ENCODE measurements at regions of chr1 and their contacts with region 1.

Region 1: GRCh38 chr1:64891448-64891825 is 74.9 kb downstream of the JAK1 start:
- DNase-seq: no peak
- ATAC-seq: peak in 7 of 8 donors; percentile 34 to 76 (median 61)
- H3K4me3 ChIP-seq: peak overlapping the region in 6 of 10 donors; percentile 1 to 35 (median 20)
- H3K27ac ChIP-seq: peak overlapping the region in 9 of 10 donors; percentile 15 to 69 (median 48)
- H3K4me1 ChIP-seq: peaks cover 18 to 97% (median 85%) of the 10 kb centered on the region in 9 donors
- H3K27me3 ChIP-seq: no peaks in the 10 kb centered on the region
- CTCF ChIP-seq: no peak

Region 2: GRCh38 chr1:64933296-64934070 is 42.0 kb after region 1 on chr1:
- intact Hi-C with region 1: loop called in 1 of 10 experiments (anchors 5 kb)
- DNase-seq: peak in 1 of 2 donors; percentile 58
- ATAC-seq: peak; percentile 70 to 91 (median 83)
- H3K4me3 ChIP-seq: peak overlapping the region in 2 of 10 donors; percentile 1 to 8
- H3K27ac ChIP-seq: peak overlapping the region; percentile 53 to 85 (median 73)
- H3K4me1 ChIP-seq: peaks cover 9 to 65% (median 56%) of the 10 kb centered on the region in 9 donors
- H3K27me3 ChIP-seq: no peaks in the 10 kb centered on the region
- CTCF ChIP-seq: no peak

Region 3: GRCh38 chr1:65174585-65174984 is 283.1 kb after region 1 on chr1:
- intact Hi-C with region 1: loop called in 1 of 10 experiments (anchors 5 kb)
- DNase-seq: peak in 1 of 2 donors; percentile 71
- ATAC-seq: peak; percentile 31 to 62 (median 54)
- H3K4me3 ChIP-seq: no peak overlapping the region
- H3K27ac ChIP-seq: peak overlapping the region; percentile 55 to 88 (median 85)
- H3K4me1 ChIP-seq: peaks cover 6 to 84% (median 67%) of the 10 kb centered on the region in 9 donors
- H3K27me3 ChIP-seq: no peaks in the 10 kb centered on the region
- CTCF ChIP-seq: no peak

Region 4: GRCh38 chr1:65213271-65214023 is 322.0 kb after region 1 on chr1:
- intact Hi-C with region 1: no loop called
- DNase-seq: no peak
- ATAC-seq: peak in 3 of 8 donors; percentile 7 to 43 (median 15)
- H3K4me3 ChIP-seq: no peak overlapping the region
- H3K27ac ChIP-seq: no peak overlapping the region
- H3K4me1 ChIP-seq: peaks cover 0 to 26% (median 12%) of the 10 kb centered on the region in 9 donors
- H3K27me3 ChIP-seq: no peaks in the 10 kb centered on the region
- CTCF ChIP-seq: no peak

Region 5: DNA sequence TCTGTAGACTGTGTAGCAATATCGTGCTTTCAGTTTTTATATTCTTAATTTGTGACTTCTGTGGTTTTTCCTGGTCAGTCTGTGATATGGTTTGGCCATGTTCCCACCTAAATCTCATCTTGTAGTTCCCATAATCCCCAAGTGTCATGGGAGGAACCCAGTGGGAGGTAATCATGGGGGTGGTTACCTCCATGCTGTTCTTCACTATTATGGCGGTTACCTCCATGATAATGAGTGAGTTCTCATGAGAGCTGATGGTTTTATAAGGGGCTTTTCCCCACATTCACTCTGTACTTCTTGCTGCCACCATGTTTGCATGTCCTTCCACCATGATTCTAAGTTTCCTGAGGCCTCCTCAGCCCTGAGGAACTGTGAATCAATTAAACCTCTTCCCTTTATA is 698.8 kb after region 1 on chr1:
- intact Hi-C with region 1: no loop called
- DNase-seq: no peak
- ATAC-seq: no peak
- H3K4me3 ChIP-seq: no peak overlapping the region
- H3K27ac ChIP-seq: no peak overlapping the region
- H3K4me1 ChIP-seq: no peaks in the 10 kb centered on the region
- H3K27me3 ChIP-seq: no peaks in the 10 kb centered on the region
- CTCF ChIP-seq: no peak